ENCODE measurements at regions of chr11 and their contacts with region 1.

Region 1: GRCh38 chr11:102346748-102347461 is at the start of gene BIRC2:
- DNase-seq: peak; percentile 67
- ATAC-seq: peak; percentile 86
- H3K4me3 ChIP-seq: peak within 1 kb of the TSS; percentile 77
- H3K27ac ChIP-seq: peak within 1 kb of the TSS; percentile 96
- H3K4me1 ChIP-seq: no peaks in the 10 kb centered on the region
- H3K27me3 ChIP-seq: no peaks in the 10 kb centered on the region
- CTCF ChIP-seq: peak; percentile 71 to 90 (median 80)
- EP300 ChIP-seq: peak; percentile 65 to 78; a peak in 3 of 4 replicates
- POLR2A ChIP-seq: peak; percentile 92
- RAD21 ChIP-seq: no peak; the same call in 1 of the 2 replicates
- polyA plus RNA-seq, gene BIRC2: 13.8 to 17.8 TPM

Region 2: DNA sequence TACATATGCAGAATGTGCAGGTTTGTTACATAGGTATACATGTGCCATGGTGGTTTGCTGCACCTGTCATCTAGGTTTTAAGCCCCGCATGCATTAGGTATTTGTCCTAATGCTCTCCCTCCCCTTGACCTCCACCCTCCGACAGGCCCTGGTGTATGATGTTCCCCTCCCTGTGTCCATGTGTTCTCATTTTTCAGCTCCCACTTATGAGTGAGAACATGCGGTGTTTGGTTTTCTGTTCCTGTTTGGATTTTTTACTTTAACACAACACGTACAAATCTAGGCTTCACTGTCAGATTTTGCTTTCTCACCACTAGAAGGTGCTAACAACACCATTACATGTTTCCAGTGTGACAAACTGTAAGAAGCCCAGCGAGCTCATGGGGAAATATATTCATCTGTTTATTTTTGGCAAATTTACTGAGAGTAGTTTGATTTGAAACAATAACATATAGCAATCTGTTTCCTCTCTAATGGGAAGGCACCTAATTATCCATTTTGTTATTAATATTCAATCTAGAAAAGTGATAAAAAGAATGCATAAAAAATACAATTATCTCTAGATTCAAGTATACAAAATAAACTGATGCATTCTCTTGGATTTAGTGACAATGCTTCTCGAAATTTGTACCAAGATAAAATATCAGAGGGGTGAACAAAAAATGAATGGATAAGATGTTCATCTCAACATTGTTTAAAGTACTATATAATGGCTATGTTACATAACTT is 52.9 kb before region 1 on chr11:
- CTCF ChIA-PET with region 1: interaction called, 234 read pairs
- POLR2A ChIA-PET with region 1: interaction called, 5 read pairs
- RAD21 ChIA-PET with region 1: interaction called, 54 read pairs
- SMC1A ChIA-PET with region 1: interaction called, 46 read pairs
- in situ Hi-C with region 1: loop called (anchors 5 kb)
- intact Hi-C with region 1: no loop called
- DNase-seq: no peak
- ATAC-seq: peak; percentile 96
- H3K4me3 ChIP-seq: no peak overlapping the region
- H3K27ac ChIP-seq: 0 out of 2 replicates have a peak overlapping the region, but pooled peaks have one; percentile 8
- H3K4me1 ChIP-seq: peaks cover 12% of the 10 kb centered on the region
- H3K27me3 ChIP-seq: no peaks in the 10 kb centered on the region
- CTCF ChIP-seq: peak; percentile 77 to 81 (median 79)
- EP300 ChIP-seq: no peak
- POLR2A ChIP-seq: no peak
- RAD21 ChIP-seq: peak; percentile 84

Region 3: DNA sequence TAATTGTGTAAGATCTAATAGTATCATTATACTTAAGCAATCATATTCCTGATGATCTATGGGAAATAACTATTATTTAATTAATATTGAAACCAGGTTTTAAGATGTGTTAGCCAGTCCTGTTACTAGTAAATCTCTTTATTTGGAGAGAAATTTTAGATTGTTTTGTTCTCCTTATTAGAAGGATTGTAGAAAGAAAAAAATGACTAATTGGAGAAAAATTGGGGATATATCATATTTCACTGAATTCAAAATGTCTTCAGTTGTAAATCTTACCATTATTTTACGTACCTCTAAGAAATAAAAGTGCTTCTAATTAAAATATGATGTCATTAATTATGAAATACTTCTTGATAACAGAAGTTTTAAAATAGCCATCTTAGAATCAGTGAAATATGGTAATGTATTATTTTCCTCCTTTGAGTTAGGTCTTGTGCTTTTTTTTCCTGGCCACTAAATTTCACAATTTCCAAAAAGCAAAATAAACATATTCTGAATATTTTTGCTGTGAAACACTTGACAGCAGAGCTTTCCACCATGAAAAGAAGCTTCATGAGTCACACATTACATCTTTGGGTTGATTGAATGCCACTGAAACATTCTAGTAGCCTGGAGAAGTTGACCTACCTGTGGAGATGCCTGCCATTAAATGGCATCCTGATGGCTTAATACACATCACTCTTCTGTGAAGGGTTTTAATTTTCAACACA is 23.2 kb before region 1 on chr11:
- CTCF ChIA-PET with region 1: interaction called, 19 read pairs
- POLR2A ChIA-PET with region 1: interaction called, 3 read pairs
- RAD21 ChIA-PET with region 1: interaction called, 10 read pairs
- SMC1A ChIA-PET with region 1: interaction called, 22 read pairs
- in situ Hi-C with region 1: no loop called
- intact Hi-C with region 1: no loop called
- DNase-seq: no peak
- ATAC-seq: no peak
- H3K4me3 ChIP-seq: peak overlapping the region; percentile 49; the same call in 1 of the 2 replicates
- H3K27ac ChIP-seq: no peak overlapping the region
- H3K4me1 ChIP-seq: no peaks in the 10 kb centered on the region
- H3K27me3 ChIP-seq: no peaks in the 10 kb centered on the region
- CTCF ChIP-seq: no peak
- EP300 ChIP-seq: no peak
- POLR2A ChIP-seq: no peak
- RAD21 ChIP-seq: no peak

Region 4: GRCh38 chr11:102361086-102362031 is 14.5 kb after region 1 on chr11:
- CTCF ChIA-PET with region 1: interaction called, 19 read pairs
- POLR2A ChIA-PET with region 1: interaction called, 4 read pairs
- RAD21 ChIA-PET with region 1: interaction called, 22 read pairs
- SMC1A ChIA-PET with region 1: interaction called, 51 read pairs
- in situ Hi-C with region 1: no loop called
- intact Hi-C with region 1: no loop called
- DNase-seq: peak; percentile 74
- ATAC-seq: peak; percentile 95
- H3K4me3 ChIP-seq: no peak overlapping the region
- H3K27ac ChIP-seq: no peak overlapping the region
- H3K4me1 ChIP-seq: no peaks in the 10 kb centered on the region
- H3K27me3 ChIP-seq: no peaks in the 10 kb centered on the region
- CTCF ChIP-seq: 0 out of 6 replicates have a peak, but pooled peaks of 1 of the 3 experiments have one; percentile 8
- EP300 ChIP-seq: no peak
- POLR2A ChIP-seq: no peak
- RAD21 ChIP-seq: no peak

Region 5: DNA sequence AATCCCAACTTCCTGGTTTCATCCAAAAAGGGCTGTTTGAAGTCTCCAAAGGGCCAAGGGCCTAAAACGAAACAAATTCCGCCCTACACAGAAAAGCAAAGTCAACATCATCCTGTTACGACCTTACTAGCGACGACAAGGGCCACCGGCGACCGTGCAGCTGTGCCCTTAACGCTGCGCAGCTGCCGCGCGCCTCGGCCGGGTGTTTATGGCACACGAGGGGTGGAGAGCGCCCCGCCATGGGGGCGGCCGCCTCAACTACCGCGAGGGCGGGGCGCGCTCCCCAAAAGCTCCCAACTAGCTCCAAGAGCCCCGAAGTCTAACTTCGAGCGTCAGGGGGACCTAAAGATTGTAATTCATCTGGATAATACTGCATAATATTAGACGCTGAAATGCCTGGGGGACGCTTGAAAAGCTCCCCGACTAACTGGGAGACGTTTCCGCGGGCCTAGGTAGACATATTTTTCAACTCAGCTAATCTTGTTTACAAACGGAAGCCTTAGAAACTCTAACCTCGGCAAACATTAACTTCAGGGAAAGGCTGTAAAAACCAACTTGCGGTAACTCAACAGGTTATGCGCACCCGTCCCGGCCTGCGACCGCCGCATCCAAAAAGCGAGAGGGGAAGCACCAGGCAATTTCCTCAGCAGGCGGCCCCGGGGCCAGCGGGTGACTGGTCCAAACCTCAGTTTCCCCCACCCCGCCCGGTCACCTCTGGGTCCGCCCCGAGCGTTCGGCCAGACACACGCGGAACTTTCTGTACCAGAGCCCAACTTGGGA is 105.0 kb after region 1 on chr11:
- CTCF ChIA-PET with region 1: interaction called, 6 read pairs
- POLR2A ChIA-PET with region 1: no interaction called
- RAD21 ChIA-PET with region 1: interaction called, 6 read pairs
- SMC1A ChIA-PET with region 1: interaction called, 5 read pairs
- in situ Hi-C with region 1: no loop called
- intact Hi-C with region 1: loop called (anchors 2 kb)
- DNase-seq: no peak
- ATAC-seq: peak; percentile 75
- H3K4me3 ChIP-seq: peak overlapping the region; percentile 75
- H3K27ac ChIP-seq: peak overlapping the region; percentile 79
- H3K4me1 ChIP-seq: peaks cover 17% of the 10 kb centered on the region; the same call in 1 of the 2 replicates
- H3K27me3 ChIP-seq: no peaks in the 10 kb centered on the region
- CTCF ChIP-seq: peak; percentile 27 to 44 (median 35); a peak in 3 of 6 replicates
- EP300 ChIP-seq: no peak
- POLR2A ChIP-seq: peak; percentile 84
- RAD21 ChIP-seq: peak; percentile 20; the same call in 1 of the 2 replicates